ENCODE measurements at regions of chr1 and their contacts with region 1.

Region 1: GRCh38 chr1:87131809-87132283 is 196.8 kb upstream of the LMO4 start:
- DNase-seq: peak; percentile 67 to 98 (median 86)

Region 2: GRCh38 chr1:87292684-87293493 is 161.0 kb after region 1 on chr1:
- intact Hi-C with region 1: loop called (anchors 10 kb)
- DNase-seq: peak in 4 of 10 donors; percentile 56 to 70 (median 60)

Region 3: DNA sequence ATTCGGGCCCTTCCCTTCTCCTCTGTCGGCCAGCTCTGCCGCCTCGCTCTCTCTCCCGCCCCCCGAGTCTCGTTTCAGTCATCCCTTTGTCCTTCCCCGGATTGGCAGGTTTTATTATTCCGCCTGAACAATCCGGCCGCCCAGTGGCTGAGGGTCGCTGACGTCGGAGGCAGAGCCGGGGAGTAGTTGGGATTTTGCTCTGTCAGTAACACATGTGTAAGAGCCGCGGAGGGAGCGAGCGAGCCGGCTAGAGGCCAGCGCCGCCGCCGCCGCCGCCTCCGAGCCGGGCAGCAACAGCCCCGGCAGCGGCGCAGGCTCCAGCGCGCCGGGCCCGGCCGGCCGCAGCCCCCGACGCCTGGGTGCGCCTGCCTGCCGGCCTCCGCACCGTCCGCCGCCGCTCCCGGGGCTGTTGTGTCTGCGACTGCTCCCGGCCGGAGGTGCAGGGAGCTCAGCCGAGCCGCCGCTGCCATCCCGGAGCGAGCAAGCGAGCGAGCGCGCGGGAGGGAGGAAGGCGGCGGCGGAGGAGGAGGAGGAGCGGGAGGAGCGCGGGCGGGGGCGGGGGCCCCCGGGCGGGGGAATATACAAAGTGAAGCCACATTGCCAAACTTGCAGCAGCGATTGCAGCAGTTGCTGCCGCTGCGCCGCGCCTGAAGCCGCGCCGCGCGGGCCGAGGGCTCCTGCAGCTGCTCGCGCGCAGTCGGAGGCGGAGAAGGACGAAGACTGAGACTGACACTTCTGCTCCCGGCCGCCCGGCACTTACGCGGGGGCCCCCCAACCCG is 196.6 kb after region 1 on chr1 and contains the start of gene LMO4:
- intact Hi-C with region 1: loop called (anchors 2 kb)
- DNase-seq: peak; percentile 94 to 99 (median 96)

Region 4: DNA sequence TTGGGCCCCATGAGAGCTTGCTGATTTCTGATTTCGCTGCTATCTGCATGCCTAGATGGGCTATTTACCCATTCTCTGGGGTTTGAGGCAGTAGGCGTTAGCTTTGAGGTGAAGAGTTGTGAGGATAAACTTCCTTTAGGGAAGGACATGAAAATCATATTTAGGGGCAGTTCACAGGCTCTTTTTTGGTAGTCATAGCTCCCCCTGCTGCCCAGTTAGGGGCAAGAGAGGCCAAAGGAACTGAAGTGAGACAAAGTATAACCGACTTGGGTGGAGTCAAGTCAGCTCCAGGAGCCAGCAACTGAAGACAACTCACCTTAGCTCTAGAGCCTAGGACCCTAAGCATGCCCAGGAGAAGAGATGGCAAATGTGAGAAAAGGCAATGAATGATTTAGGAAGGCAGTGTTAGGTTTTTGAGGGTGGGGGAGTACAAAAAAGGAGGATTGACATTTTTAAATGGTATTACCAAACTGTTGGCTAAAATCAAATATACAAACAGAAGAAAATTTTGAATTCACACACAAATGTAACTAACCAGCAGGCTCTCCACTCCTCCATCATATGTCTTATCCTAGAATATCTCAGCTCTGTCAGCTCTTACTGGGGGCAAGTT is 822.0 kb after region 1 on chr1:
- intact Hi-C with region 1: loop called (anchors 2 kb)
- DNase-seq: peak in 7 of 10 donors; percentile 35 to 90 (median 58)

Region 5: DNA sequence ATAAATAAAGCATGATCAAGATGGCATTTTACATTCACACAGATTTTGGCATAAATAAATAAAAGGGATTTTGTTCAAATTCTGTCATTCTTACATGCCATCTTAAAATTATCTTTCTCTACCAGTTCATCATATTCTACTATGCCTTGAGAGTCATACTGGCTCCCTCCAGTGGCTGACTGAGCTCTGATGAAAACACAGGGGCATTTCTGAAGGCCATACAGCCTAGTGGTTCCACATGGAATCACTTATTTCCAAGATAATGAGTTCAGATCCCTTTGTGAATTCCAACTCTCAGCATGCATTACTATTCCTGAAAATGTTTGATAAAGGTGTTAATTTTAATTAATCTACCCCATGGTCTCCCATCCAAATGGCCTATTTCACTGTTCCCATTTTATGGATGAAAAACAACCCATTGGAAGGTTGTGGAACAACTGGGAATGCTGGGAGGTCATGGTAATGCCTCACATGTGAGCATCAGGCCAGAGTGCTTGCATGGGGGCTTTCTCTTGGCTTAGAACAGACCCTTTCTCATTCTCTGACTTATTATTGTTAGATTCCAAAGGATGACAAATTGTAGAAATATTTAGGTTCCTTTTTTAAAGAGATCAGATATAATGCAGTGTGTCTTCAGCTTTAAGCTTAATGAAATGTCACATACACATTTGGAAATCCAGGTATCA is 929.8 kb after region 1 on chr1:
- intact Hi-C with region 1: loop called (anchors 5 kb)
- DNase-seq: peak in 5 of 10 donors; percentile 14 to 64 (median 23)

Region 6: DNA sequence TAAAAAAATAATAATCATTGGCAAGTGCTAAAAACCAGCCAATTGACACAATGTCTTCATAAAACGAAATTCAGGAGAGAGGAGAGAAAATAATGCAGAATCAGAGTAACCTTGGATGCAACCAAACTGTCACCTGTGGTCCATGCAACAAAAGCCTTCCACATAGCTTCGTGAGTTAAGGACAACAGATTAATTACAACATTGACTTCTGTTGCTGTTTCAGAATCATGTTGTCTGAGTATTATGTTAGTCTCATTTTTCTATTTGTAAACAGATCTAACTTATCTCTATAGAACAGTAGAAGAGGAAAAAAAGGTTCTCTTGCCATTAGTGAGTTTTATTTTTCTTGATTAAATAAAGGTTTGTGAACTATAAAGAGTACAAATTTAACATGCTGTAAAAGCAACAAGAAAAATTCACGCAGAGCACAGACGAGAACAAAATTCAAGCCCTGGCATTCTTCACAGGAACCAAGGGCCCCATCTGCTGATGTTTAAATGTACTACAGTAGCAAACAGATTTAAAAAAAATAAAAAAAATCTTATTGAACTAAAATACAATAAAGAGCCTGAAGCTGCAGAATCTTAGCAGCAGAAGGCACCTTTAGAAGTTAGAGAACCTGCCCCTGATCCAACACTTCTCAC is 1171.1 kb after region 1 on chr1:
- intact Hi-C with region 1: loop called (anchors 5 kb)
- DNase-seq: peak in 2 of 10 donors; percentile 16 to 45